ENCODE measurements at regions of chr1 and their contacts with region 1.

Region 1: DNA sequence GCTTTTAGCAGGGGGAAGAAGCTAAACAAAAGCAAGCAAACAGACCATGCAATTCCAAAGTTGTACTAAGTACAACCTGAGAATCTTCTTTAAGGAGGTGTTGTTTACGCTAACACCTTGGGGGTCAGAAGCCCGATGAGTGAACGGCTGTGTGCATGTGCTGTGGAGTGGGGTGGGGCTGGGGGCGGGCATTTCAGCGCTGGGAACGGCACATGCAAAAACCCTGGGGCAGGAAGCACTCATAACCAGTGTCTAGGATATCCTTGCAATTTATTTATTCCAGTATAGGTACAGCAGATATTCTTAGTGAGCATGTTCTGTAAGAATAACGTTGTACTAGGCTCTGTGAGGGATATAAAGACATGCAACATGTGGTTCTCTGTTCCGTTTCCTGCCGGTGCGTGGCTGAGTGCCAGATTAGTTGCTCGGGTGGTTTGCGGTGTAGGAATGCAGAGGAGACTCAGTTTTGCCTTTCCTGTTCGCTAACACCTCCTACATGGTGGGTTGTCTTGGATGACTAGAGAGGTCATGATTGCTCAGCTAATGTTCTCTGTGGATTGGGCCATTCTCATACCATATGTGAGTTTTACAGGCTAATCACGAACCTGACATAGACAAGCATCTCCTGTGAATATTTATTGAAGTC is 3.7 kb downstream of the FASLG start:
- DNase-seq: peak; percentile 65 to 95 (median 88)
- ATAC-seq: peak; percentile 84
- H3K4me3 ChIP-seq: peak overlapping the region in 1 of 2 experiments; percentile 68
- H3K4me3 Mint-ChIP-seq: peak overlapping the region; percentile 63
- H3K27ac ChIP-seq: peak overlapping the region in 1 of 2 experiments; percentile 77
- H3K27ac Mint-ChIP-seq: peak overlapping the region; percentile 79
- H3K4me1 ChIP-seq: peaks cover 39% of the 10 kb centered on the region
- H3K4me1 Mint-ChIP-seq: peaks cover 56% of the 10 kb centered on the region
- H3K27me3 ChIP-seq: no peaks in the 10 kb centered on the region
- H3K27me3 Mint-ChIP-seq: peaks cover 12% of the 10 kb centered on the region
- CTCF ChIP-seq: no peak

Region 2: GRCh38 chr1:171081314-171081753 is 1581.3 kb before region 1 on chr1:
- CTCF ChIA-PET with region 1: no interaction called
- POLR2A ChIA-PET with region 1: no interaction called
- intact Hi-C with region 1: no loop called
- DNase-seq: no peak
- ATAC-seq: no peak
- H3K4me3 ChIP-seq: no peak overlapping the region
- H3K4me3 Mint-ChIP-seq: no peak overlapping the region
- H3K27ac ChIP-seq: no peak overlapping the region
- H3K27ac Mint-ChIP-seq: no peak overlapping the region
- H3K4me1 ChIP-seq: no peaks in the 10 kb centered on the region
- H3K4me1 Mint-ChIP-seq: no peaks in the 10 kb centered on the region
- H3K27me3 ChIP-seq: no peaks in the 10 kb centered on the region
- H3K27me3 Mint-ChIP-seq: peaks cover 3% of the 10 kb centered on the region
- CTCF ChIP-seq: no peak

Region 3: DNA sequence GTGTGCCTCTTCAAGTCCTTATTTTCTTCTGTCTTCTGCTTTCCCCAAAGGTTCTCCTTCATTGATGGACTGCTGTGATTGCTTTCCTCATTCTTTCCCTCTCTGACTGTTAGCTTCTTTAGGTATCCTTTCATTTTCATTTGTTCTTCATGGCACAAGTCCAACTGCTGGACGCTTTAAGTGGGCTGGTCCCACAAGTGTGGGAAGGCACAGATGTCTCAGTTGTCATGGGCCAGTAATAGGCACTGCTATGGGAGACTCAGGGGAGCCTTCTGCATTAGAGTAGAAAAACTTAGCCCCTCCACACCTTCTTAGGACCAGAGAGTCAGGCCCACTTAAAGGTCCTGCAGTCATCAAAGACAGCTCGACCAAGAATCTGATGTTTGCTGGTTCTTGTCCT is 364.4 kb before region 1 on chr1:
- CTCF ChIA-PET with region 1: no interaction called
- POLR2A ChIA-PET with region 1: no interaction called
- intact Hi-C with region 1: no loop called
- DNase-seq: no peak
- ATAC-seq: no peak
- H3K4me3 ChIP-seq: no peak overlapping the region
- H3K4me3 Mint-ChIP-seq: no peak overlapping the region
- H3K27ac ChIP-seq: no peak overlapping the region
- H3K27ac Mint-ChIP-seq: no peak overlapping the region
- H3K4me1 ChIP-seq: no peaks in the 10 kb centered on the region
- H3K4me1 Mint-ChIP-seq: no peaks in the 10 kb centered on the region
- H3K27me3 ChIP-seq: no peaks in the 10 kb centered on the region
- H3K27me3 Mint-ChIP-seq: no peaks in the 10 kb centered on the region
- CTCF ChIP-seq: no peak

Region 4: GRCh38 chr1:172609528-172609927 is 53.1 kb before region 1 on chr1:
- CTCF ChIA-PET with region 1: interaction called, 9 read pairs
- POLR2A ChIA-PET with region 1: no interaction called
- intact Hi-C with region 1: loop called in 1 of 2 experiments (anchors 5 kb)
- DNase-seq: peak in 2 of 9 experiments; percentile 53 to 62
- ATAC-seq: peak; percentile 78
- H3K4me3 ChIP-seq: no peak overlapping the region
- H3K4me3 Mint-ChIP-seq: no peak overlapping the region
- H3K27ac ChIP-seq: no peak overlapping the region
- H3K27ac Mint-ChIP-seq: no peak overlapping the region
- H3K4me1 ChIP-seq: no peaks in the 10 kb centered on the region
- H3K4me1 Mint-ChIP-seq: peaks cover 4% of the 10 kb centered on the region
- H3K27me3 ChIP-seq: no peaks in the 10 kb centered on the region
- H3K27me3 Mint-ChIP-seq: no peaks in the 10 kb centered on the region
- CTCF ChIP-seq: peak; percentile 74

Region 5: DNA sequence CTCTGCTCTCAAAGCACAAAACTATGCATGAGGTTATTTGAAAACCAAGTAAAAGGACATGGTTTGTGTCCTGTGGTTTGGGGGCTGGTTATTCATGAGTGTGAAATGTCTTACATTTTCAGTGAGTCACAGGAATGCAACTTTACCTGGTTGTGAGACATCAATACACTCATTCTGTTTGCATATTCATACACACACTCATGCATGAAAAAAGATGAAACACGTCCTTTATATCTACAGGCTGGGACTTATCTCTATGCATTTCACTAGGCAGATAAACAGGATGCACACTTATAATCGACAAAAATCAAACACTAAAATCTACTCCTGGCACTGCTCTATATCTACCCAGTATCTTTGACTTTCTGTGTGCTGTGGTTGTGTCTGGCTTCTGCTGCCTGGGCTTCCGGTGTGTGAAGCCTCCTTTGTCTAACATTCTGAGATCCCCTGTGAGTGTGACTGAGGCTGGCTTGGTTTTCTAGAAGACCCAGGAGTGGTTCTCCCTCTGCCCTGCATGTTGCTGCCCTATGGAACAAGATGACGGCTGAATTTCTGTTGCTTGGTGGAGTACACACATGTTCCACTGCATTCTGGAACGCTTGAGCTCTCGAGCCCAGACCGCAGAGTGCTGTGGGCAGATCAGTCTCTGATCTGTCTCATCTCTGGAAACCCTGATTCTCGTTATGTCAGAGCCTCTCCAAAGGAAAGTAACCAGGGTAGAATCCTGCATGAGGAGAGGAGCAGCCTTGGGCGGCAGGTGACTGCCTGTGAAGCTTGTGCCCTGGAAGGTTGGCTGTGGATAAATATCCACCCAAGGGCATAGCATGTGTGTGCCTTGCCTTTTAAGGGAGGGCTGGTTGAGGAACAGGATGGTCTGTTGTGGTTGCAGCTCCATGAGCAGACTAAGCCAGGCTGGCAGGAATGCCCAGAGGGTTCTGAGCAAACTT is 23.4 kb before region 1 on chr1:
- CTCF ChIA-PET with region 1: interaction called, 3 read pairs
- POLR2A ChIA-PET with region 1: interaction called, 5 read pairs
- intact Hi-C with region 1: loop called in 1 of 2 experiments (anchors 1 kb)
- DNase-seq: peak; percentile 25 to 81 (median 63)
- ATAC-seq: peak; percentile 73
- H3K4me3 ChIP-seq: peak overlapping the region in 1 of 2 experiments; percentile 16
- H3K4me3 Mint-ChIP-seq: peak overlapping the region; percentile 65
- H3K27ac ChIP-seq: peak overlapping the region; percentile 5 to 59
- H3K27ac Mint-ChIP-seq: peak overlapping the region; percentile 85
- H3K4me1 ChIP-seq: peaks cover 48% of the 10 kb centered on the region
- H3K4me1 Mint-ChIP-seq: peaks cover 69% of the 10 kb centered on the region
- H3K27me3 ChIP-seq: no peaks in the 10 kb centered on the region
- H3K27me3 Mint-ChIP-seq: no peaks in the 10 kb centered on the region
- CTCF ChIP-seq: no peak

Region 6: DNA sequence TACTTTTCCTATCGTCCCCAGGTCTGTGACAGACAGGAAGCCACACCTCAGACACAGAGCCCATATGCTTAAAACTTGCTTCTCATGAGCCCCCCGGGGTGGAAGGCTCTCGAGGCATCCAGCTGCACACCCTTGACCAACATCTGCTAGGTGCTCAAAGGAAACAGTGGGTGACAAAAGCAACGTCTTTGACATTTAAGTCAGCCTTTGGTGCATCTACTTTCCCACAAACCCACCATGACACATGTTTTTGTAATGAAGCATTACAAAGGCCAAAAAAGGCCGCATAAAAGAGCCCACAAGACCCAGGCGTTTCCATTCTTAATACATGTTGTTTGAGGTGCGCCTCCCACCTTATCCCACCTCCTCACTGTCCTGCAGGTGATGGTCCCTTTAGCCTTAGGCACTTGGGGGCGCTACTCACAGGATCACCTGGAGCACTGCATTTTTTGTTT is 15.4 kb before region 1 on chr1:
- CTCF ChIA-PET with region 1: no interaction called
- POLR2A ChIA-PET with region 1: interaction called, 5 read pairs
- intact Hi-C with region 1: loop called (anchors 2 kb)
- DNase-seq: peak in 6 of 9 experiments; percentile 46 to 78 (median 62)
- ATAC-seq: peak; percentile 81
- H3K4me3 ChIP-seq: no peak overlapping the region
- H3K4me3 Mint-ChIP-seq: peak overlapping the region; percentile 22
- H3K27ac ChIP-seq: peak overlapping the region in 1 of 2 experiments; percentile 59
- H3K27ac Mint-ChIP-seq: peak overlapping the region; percentile 20
- H3K4me1 ChIP-seq: peaks cover 37% of the 10 kb centered on the region
- H3K4me1 Mint-ChIP-seq: peaks cover 57% of the 10 kb centered on the region
- H3K27me3 ChIP-seq: no peaks in the 10 kb centered on the region
- H3K27me3 Mint-ChIP-seq: peaks cover 6% of the 10 kb centered on the region
- CTCF ChIP-seq: no peak

Region 7: GRCh38 chr1:172699111-172699510 is 36.5 kb after region 1 on chr1:
- CTCF ChIA-PET with region 1: no interaction called
- POLR2A ChIA-PET with region 1: interaction called, 3 read pairs
- intact Hi-C with region 1: loop called in 1 of 2 experiments (anchors 1 kb)
- DNase-seq: peak; percentile 43 to 92 (median 77)
- ATAC-seq: peak; percentile 76
- H3K4me3 ChIP-seq: peak overlapping the region in 1 of 2 experiments; percentile 0
- H3K4me3 Mint-ChIP-seq: peak overlapping the region; percentile 64
- H3K27ac ChIP-seq: peak overlapping the region; percentile 6 to 84
- H3K27ac Mint-ChIP-seq: peak overlapping the region; percentile 91
- H3K4me1 ChIP-seq: peaks cover 76% of the 10 kb centered on the region
- H3K4me1 Mint-ChIP-seq: peaks cover 49% of the 10 kb centered on the region
- H3K27me3 ChIP-seq: no peaks in the 10 kb centered on the region
- H3K27me3 Mint-ChIP-seq: no peaks in the 10 kb centered on the region
- CTCF ChIP-seq: no peak

Region 8: GRCh38 chr1:172708452-172708851 is 45.9 kb after region 1 on chr1:
- CTCF ChIA-PET with region 1: no interaction called
- POLR2A ChIA-PET with region 1: interaction called, 4 read pairs
- intact Hi-C with region 1: loop called in 1 of 2 experiments (anchors 2 kb)
- DNase-seq: peak in 6 of 9 experiments; percentile 21 to 69 (median 38)
- ATAC-seq: peak; percentile 79
- H3K4me3 ChIP-seq: no peak overlapping the region
- H3K4me3 Mint-ChIP-seq: peak overlapping the region; percentile 48
- H3K27ac ChIP-seq: peak overlapping the region in 1 of 2 experiments; percentile 40
- H3K27ac Mint-ChIP-seq: peak overlapping the region; percentile 38
- H3K4me1 ChIP-seq: peaks cover 29% of the 10 kb centered on the region
- H3K4me1 Mint-ChIP-seq: peaks cover 27% of the 10 kb centered on the region
- H3K27me3 ChIP-seq: peaks cover 0 to 2% of the 10 kb centered on the region in 2 experiments
- H3K27me3 Mint-ChIP-seq: peaks cover 4% of the 10 kb centered on the region
- CTCF ChIP-seq: no peak

Region 9: GRCh38 chr1:172781513-172782140 is 119.0 kb after region 1 on chr1:
- CTCF ChIA-PET with region 1: no interaction called
- POLR2A ChIA-PET with region 1: no interaction called
- intact Hi-C with region 1: no loop called
- DNase-seq: no peak
- ATAC-seq: no peak
- H3K4me3 ChIP-seq: no peak overlapping the region
- H3K4me3 Mint-ChIP-seq: no peak overlapping the region
- H3K27ac ChIP-seq: no peak overlapping the region
- H3K27ac Mint-ChIP-seq: no peak overlapping the region
- H3K4me1 ChIP-seq: no peaks in the 10 kb centered on the region
- H3K4me1 Mint-ChIP-seq: peaks cover 18% of the 10 kb centered on the region
- H3K27me3 ChIP-seq: no peaks in the 10 kb centered on the region
- H3K27me3 Mint-ChIP-seq: no peaks in the 10 kb centered on the region
- CTCF ChIP-seq: no peak

Region 10: GRCh38 chr1:173383351-173383750 is 720.8 kb after region 1 on chr1:
- CTCF ChIA-PET with region 1: no interaction called
- POLR2A ChIA-PET with region 1: no interaction called
- intact Hi-C with region 1: no loop called
- DNase-seq: no peak
- ATAC-seq: no peak
- H3K4me3 ChIP-seq: no peak overlapping the region
- H3K4me3 Mint-ChIP-seq: no peak overlapping the region
- H3K27ac ChIP-seq: no peak overlapping the region
- H3K27ac Mint-ChIP-seq: no peak overlapping the region
- H3K4me1 ChIP-seq: no peaks in the 10 kb centered on the region
- H3K4me1 Mint-ChIP-seq: no peaks in the 10 kb centered on the region
- H3K27me3 ChIP-seq: no peaks in the 10 kb centered on the region
- H3K27me3 Mint-ChIP-seq: no peaks in the 10 kb centered on the region
- CTCF ChIP-seq: no peak